ENCODE measurements at regions of chr1 and their contacts with region 1.

Region 1: DNA sequence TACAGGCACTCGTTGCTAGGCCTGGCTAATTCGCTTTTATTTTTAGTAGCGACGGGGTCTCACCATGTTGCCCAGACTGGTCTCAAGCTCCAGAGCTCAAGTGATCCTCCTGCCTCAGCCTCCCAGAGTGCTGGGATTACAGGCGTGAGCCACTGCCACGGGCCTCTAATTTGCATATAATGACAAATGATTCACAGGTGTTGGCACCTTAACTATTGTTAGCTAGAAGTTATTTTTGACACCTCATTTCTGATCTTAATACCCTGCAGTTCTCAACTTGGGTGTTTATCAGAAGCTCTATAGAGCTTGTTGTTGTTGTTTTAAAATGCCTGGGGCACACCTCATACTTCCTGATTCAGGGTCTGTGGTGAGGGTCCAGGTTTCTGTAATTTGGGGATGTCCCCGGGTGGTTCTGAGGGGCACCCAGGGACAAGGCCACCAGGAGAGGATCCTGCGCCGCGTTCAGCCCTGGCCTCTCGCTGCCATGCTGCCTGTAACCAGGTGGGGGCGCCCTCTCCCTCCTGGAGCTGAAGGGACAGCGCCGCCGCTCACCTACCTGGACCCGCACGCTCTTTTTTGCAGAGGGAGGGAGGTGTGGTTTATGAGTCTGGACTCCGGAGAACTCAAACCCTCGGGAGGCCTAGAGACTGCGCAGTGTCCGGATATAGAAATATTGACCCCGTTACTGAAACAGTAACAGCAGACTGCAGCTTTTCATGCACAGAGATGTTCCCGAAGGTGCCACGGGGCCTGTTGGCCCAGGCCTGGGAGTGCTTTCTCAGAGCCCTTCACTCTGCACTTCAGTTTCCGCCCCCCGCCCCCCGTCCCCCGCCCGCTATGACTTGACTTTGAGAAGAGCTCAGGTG is 23.0 kb upstream of the NEK2 start:
- DNase-seq: no peak
- H3K4me3 ChIP-seq: no peak overlapping the region
- H3K27me3 ChIP-seq: peaks cover 2% of the 10 kb centered on the region; the same call in 1 of the 2 replicates
- CTCF ChIP-seq: peak; percentile 98

Region 2: DNA sequence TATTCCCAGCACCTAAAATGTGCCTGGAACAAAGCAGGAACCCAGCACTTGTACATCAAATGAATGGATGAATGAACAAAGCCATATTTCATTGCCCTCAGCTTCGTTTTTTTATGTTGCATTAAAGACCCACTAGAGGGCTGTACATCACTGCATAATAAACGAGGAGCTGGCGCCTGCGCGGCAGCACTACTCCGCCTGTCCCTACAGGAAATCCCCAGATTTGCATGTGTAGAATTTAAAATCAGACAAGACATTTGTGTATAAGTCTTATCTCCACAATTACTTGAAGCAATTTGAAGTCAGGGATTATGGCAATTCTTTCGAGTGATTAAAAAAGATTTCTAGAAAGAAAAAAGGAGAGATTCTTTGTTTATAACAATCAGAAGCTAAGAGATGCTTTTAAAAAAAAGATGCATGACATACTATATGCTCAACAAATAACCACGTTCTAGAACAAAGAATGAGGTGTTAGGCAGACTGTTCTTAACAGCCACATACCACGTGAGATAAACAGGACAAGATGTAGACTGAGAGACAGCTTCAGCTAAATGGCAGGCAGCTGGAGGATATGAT is 17.6 kb before region 1 on chr1:
- CTCF ChIA-PET with region 1: interaction called, 39 read pairs
- POLR2A ChIA-PET with region 1: no interaction called
- DNase-seq: peak; percentile 52
- H3K4me3 ChIP-seq: no peak overlapping the region
- H3K27me3 ChIP-seq: no peaks in the 10 kb centered on the region
- CTCF ChIP-seq: peak; percentile 70

Region 3: DNA sequence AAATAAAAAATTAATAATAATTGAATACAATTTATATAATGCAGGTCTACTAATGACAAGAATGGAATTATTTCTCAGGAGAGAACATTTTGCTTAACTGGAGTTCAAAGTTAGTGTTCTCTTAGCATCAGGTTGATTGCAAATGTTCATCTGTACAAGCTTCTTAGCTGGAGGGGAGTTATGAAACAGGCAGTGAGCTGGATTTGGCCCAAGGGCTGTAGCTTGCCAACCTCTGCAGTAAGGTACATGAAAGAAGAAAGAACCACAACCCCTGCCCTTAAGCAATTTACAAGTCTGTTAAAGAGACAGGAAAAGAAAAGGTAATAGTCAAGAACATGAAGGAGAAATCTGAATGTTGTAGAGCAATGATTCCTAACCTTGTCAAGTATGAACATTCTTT is 115.2 kb after region 1 on chr1:
- CTCF ChIA-PET with region 1: interaction called, 10 read pairs
- POLR2A ChIA-PET with region 1: no interaction called
- DNase-seq: no peak
- H3K4me3 ChIP-seq: no peak overlapping the region
- H3K27me3 ChIP-seq: no peaks in the 10 kb centered on the region
- CTCF ChIP-seq: no peak

Region 4: DNA sequence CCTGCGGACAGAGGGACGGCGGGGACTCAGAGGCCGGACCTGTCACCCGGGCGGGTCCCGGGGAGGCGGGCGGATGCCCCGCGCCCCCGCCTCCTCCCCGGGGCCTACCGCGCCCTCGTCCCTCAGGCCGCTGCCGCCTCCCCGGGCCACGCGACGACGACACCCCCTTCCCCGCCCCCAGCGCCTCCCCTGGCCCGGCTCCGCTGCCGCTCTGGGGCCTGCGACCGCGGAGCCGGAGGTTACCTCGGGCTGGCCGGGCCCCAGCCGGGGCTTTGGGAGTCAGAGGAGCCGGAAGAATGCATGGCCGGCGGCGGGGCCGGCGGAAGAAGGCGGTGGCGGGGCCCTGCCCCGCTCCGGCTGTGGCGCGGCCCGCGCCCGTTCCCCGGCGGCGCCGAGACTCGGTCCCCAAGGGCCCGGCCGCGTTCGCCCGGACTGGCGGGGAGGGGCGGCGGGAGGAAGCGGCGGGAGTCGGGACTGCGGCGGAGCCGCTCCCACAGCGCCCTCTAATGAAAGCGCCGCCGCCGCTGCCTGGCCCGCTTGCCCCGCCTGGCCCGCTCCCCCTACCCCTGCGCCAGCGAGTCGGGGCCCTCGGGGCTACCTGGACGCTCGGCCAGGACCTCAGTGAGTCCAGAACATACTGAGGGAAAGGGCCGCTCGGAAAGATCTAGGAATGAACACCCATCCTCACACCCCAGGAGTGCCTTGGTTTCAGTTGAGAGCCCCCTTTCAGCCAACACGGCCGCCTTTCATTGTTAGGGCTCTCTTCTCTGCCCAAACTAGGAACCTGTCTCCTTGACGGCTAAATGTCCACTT is 132.1 kb after region 1 on chr1 and contains the start of gene LPGAT1:
- CTCF ChIA-PET with region 1: interaction called, 15 read pairs
- POLR2A ChIA-PET with region 1: no interaction called
- DNase-seq: no peak
- H3K4me3 ChIP-seq: peak within 1 kb of the TSS; percentile 68
- H3K27me3 ChIP-seq: no peaks in the 10 kb centered on the region
- CTCF ChIP-seq: peak; percentile 40
- polyA plus RNA-seq, gene LPGAT1: 7.7 and 14.4 TPM in 2 replicates